ENCODE measurements at regions of chr17 and their contacts with region 1.

Region 1: GRCh38 chr17:42459256-42459800 is 650 bp downstream of the ATP6V0A1 start:
- DNase-seq: peak; percentile 42 to 67
- ATAC-seq: peak in 3 of 4 donors; percentile 54 to 67 (median 60)
- H3K4me3 ChIP-seq: peak overlapping the region; percentile 84
- H3K27ac ChIP-seq: peak overlapping the region; percentile 96
- H3K4me1 ChIP-seq: peaks cover 51% of the 10 kb centered on the region
- H3K27me3 ChIP-seq: no peaks in the 10 kb centered on the region
- CTCF ChIP-seq: peak; percentile 19

Region 2: GRCh38 chr17:42422958-42423712 is 36.2 kb before region 1 on chr17 and contains the start of gene CAVIN1:
- intact Hi-C with region 1: loop called (anchors 1 to 5 kb)
- DNase-seq: peak; percentile 100
- ATAC-seq: peak; percentile 88 to 90 (median 88)
- H3K4me3 ChIP-seq: peak within 1 kb of the TSS; percentile 91
- H3K27ac ChIP-seq: peak within 1 kb of the TSS; percentile 94
- H3K4me1 ChIP-seq: peaks cover 39% of the 10 kb centered on the region
- H3K27me3 ChIP-seq: no peaks in the 10 kb centered on the region
- CTCF ChIP-seq: no peak
- total RNA-seq, gene CAVIN1: 109 to 151 (median 128) TPM

Region 3: GRCh38 chr17:42493319-42493718 is 34.0 kb after region 1 on chr17:
- intact Hi-C with region 1: no loop called
- DNase-seq: no peak
- ATAC-seq: no peak
- H3K4me3 ChIP-seq: no peak overlapping the region
- H3K27ac ChIP-seq: no peak overlapping the region
- H3K4me1 ChIP-seq: peaks cover 25% of the 10 kb centered on the region
- H3K27me3 ChIP-seq: no peaks in the 10 kb centered on the region
- CTCF ChIP-seq: no peak